RWPE1 (cell line): ENCODE measurements at regions of chr2 and their contacts with region 1.

Region 1: DNA sequence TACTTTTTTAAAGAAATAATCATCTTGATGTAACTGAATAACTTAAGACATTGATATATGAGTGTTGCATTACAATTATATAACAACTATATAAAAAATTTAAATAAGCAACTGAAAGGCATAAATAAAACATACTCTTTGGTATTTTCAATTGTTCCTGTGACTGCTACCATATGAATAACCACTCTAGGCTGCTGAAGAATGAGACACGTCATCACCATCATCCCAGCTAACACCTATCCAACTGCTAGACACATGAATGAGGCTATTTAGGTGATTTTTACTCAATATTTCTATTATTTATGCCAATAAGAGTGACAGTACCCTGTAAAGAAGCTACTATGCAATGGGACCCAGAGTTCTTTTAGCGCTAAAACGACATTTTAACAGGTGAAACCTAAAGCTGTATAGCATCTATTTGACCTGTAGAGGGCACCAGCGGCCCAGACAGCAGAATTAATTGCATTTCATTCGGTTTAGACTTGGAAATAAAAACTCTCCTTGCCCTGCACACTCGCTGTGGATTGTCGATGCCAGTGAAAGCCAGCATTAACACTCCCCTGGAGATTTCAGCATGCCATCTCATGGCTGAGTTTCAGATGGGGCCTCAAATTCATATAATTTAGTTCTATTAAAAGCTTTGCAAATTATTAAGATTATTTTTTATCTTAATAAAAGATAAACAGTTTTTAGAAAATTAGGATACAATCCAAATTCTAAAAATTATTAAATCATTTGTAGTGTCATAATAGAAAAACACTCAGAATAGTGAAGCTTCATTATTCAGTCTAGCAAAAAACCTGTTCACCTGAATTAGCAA is 89.4 kb upstream of the MAP2 start:
- DNase-seq: peak; percentile 41
- H3K27ac ChIP-seq: no peak overlapping the region
- CTCF ChIP-seq: peak; percentile 91

Region 2: GRCh38 chr2:208879666-208880065 is 454.7 kb before region 1 on chr2:
- CTCF ChIA-PET with region 1: no interaction called
- POLR2A ChIA-PET with region 1: no interaction called
- DNase-seq: no peak
- H3K27ac ChIP-seq: no peak overlapping the region
- CTCF ChIP-seq: no peak

Region 3: DNA sequence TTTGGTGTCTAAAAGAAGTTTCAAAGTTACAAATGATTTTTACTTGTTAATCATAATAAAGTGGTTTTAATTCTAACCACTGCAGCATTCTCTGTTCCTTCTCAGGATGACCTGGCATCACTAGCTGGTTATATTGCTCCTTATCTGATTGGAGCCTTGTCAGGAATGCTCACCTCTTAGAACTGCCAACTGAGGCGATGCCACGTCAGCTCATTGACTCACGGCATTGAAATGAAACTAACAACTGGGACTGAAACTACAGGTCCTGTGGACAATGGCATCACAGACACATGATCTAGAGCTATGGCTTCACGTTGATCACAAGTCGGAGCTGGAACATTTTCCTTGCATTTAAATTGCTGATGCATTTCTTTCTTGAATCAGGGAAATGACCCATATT is 34.5 kb after region 1 on chr2:
- CTCF ChIA-PET with region 1: interaction called, 10 read pairs
- POLR2A ChIA-PET with region 1: no interaction called
- DNase-seq: peak; percentile 87
- H3K27ac ChIP-seq: no peak overlapping the region
- CTCF ChIP-seq: no peak

Region 4: GRCh38 chr2:209423562-209424198 is 89.3 kb after region 1 on chr2 and contains the start of gene MAP2:
- CTCF ChIA-PET with region 1: interaction called, 57 read pairs
- POLR2A ChIA-PET with region 1: no interaction called
- DNase-seq: peak; percentile 78
- H3K27ac ChIP-seq: no peak within 1 kb of the TSS
- CTCF ChIP-seq: peak; percentile 91

Region 5: GRCh38 chr2:209556354-209556961 is 222.1 kb after region 1 on chr2:
- CTCF ChIA-PET with region 1: interaction called, 10 read pairs
- POLR2A ChIA-PET with region 1: no interaction called
- DNase-seq: peak; percentile 55
- H3K27ac ChIP-seq: no peak overlapping the region
- CTCF ChIP-seq: peak; percentile 51

Region 6: GRCh38 chr2:209960676-209961630 is 626.5 kb after region 1 on chr2:
- CTCF ChIA-PET with region 1: interaction called, 10 read pairs
- POLR2A ChIA-PET with region 1: no interaction called
- DNase-seq: peak; percentile 45
- H3K27ac ChIP-seq: no peak overlapping the region
- CTCF ChIP-seq: peak; percentile 64